IMR-90 (cell line): ENCODE measurements at regions of chr3 and their contacts with region 1.

Region 1: GRCh38 chr3:89358281-89358680 is 250.9 kb downstream of the EPHA3 start:
- DNase-seq: no peak
- ATAC-seq: no peak
- H3K4me3 ChIP-seq: no peak overlapping the region
- H3K27ac ChIP-seq: no peak overlapping the region
- H3K4me1 ChIP-seq: no peaks in the 10 kb centered on the region
- H3K27me3 ChIP-seq: no peaks in the 10 kb centered on the region
- CTCF ChIP-seq: no peak
- POLR2A ChIP-seq: no peak
- RAD21 ChIP-seq: no peak

Region 2: DNA sequence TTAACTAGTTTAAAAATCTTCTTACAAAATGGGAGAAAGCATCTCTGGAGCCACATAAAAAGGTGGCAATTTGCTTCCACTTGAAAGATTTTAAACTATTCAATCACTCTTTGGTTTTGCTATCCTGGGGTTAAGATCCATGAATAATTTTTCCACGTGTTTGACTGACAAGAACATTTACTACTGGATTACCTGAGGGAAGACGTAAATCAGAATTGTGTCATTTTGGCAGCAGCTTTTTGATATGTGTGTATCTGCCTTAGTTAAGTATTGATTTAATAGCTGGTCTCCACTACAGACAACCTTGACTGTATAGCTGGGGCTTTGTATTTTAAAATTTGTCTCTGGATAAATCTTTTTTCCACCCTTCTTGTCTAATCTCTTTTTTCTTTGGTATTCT is 22.6 kb before region 1 on chr3:
- CTCF ChIA-PET with region 1: no interaction called
- POLR2A ChIA-PET with region 1: no interaction called
- dilution Hi-C with region 1: no loop called
- in situ Hi-C with region 1: no loop called
- intact Hi-C with region 1: loop called (anchors 2 kb)
- DNase-seq: no peak
- ATAC-seq: no peak
- H3K4me3 ChIP-seq: no peak overlapping the region
- H3K27ac ChIP-seq: no peak overlapping the region
- H3K4me1 ChIP-seq: no peaks in the 10 kb centered on the region
- H3K27me3 ChIP-seq: no peaks in the 10 kb centered on the region
- CTCF ChIP-seq: no peak
- POLR2A ChIP-seq: no peak
- RAD21 ChIP-seq: no peak

Region 3: GRCh38 chr3:89395456-89395855 is 37.2 kb after region 1 on chr3:
- CTCF ChIA-PET with region 1: no interaction called
- POLR2A ChIA-PET with region 1: no interaction called
- dilution Hi-C with region 1: no loop called
- in situ Hi-C with region 1: no loop called
- intact Hi-C with region 1: no loop called
- DNase-seq: no peak
- ATAC-seq: no peak
- H3K4me3 ChIP-seq: no peak overlapping the region
- H3K27ac ChIP-seq: no peak overlapping the region
- H3K4me1 ChIP-seq: no peaks in the 10 kb centered on the region
- H3K27me3 ChIP-seq: no peaks in the 10 kb centered on the region
- CTCF ChIP-seq: no peak
- POLR2A ChIP-seq: no peak
- RAD21 ChIP-seq: no peak